H1 (cell line): ENCODE measurements at regions of chr2 and their contacts with region 1.

Region 1: DNA sequence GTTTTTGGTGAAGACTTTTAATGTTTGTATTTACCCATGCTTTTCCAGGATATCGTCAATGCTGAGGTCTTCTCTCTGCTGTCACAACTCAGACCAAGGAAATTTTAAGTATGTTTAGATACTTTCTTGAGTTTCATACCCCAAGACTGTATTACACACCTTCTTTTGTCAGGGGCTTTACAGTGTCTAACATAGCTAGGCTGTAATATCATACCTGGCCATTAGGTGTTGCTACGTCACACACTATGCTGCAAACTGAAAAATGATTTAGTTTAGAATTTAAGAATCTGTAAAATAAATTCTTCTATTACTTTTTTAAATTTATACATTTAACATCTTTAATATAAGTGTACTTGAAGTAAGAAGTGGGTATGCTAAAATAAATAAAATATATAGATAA is 358.4 kb upstream of the NRP2 start:
- DNase-seq: no peak
- H3K4me3 ChIP-seq: no peak overlapping the region
- H3K27ac ChIP-seq: no peak overlapping the region
- H3K4me1 ChIP-seq: no peaks in the 10 kb centered on the region
- H3K27me3 ChIP-seq: no peaks in the 10 kb centered on the region
- CTCF ChIP-seq: peak in 2 of 3 experiments; percentile 35 to 56; a peak in 2 of 4 replicates
- EP300 ChIP-seq: no peak
- POLR2A ChIP-seq: no peak
- RAD21 ChIP-seq: peak; percentile 73 to 76

Region 2: DNA sequence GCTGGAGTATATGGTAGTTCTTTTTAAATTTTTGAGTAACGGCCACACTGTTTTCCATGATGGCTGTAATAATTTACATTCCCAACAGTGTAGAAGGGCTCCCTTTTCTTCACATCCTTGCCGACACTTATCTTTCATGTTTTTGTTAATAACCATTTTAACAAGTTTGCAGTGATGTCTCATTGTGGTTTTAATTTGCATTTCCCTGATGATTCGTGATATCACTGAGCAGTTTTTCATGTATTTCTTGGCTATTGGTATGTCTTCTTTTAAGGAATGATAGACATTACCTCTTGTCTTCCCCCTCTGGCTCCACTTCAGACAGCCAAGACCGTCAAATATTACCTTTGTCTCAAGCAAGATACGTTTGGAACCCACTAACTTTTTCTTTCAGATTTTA is 12.7 kb before region 1 on chr2:
- CTCF ChIA-PET with region 1: interaction called, 12 read pairs
- POLR2A ChIA-PET with region 1: interaction called, 3 read pairs
- DNase-seq: no peak
- H3K4me3 ChIP-seq: no peak overlapping the region
- H3K27ac ChIP-seq: no peak overlapping the region
- H3K4me1 ChIP-seq: no peaks in the 10 kb centered on the region
- H3K27me3 ChIP-seq: peaks cover 0 to 2% (median 0%) of the 10 kb centered on the region in 4 experiments; a peak in 1 of 7 replicates
- CTCF ChIP-seq: no peak
- EP300 ChIP-seq: no peak
- POLR2A ChIP-seq: no peak
- RAD21 ChIP-seq: no peak

Region 3: GRCh38 chr2:205427112-205427511 is 103.2 kb after region 1 on chr2:
- CTCF ChIA-PET with region 1: no interaction called
- POLR2A ChIA-PET with region 1: no interaction called
- DNase-seq: no peak
- H3K4me3 ChIP-seq: no peak overlapping the region
- H3K27ac ChIP-seq: no peak overlapping the region
- H3K4me1 ChIP-seq: peaks cover 0 to 2% (median 0%) of the 10 kb centered on the region in 4 experiments; a peak in 1 of 7 replicates
- H3K27me3 ChIP-seq: no peaks in the 10 kb centered on the region; a peak in 1 of 7 replicates
- CTCF ChIP-seq: no peak
- EP300 ChIP-seq: no peak
- POLR2A ChIP-seq: no peak
- RAD21 ChIP-seq: no peak

Region 4: GRCh38 chr2:206031162-206031784 is 707.3 kb after region 1 on chr2:
- CTCF ChIA-PET with region 1: no interaction called
- POLR2A ChIA-PET with region 1: no interaction called
- DNase-seq: no peak
- H3K4me3 ChIP-seq: no peak overlapping the region
- H3K27ac ChIP-seq: no peak overlapping the region
- H3K4me1 ChIP-seq: peaks cover 0 to 3% (median 3%) of the 10 kb centered on the region in 4 experiments; a peak in 2 of 7 replicates
- H3K27me3 ChIP-seq: no peaks in the 10 kb centered on the region
- CTCF ChIP-seq: no peak
- EP300 ChIP-seq: no peak
- POLR2A ChIP-seq: no peak
- RAD21 ChIP-seq: no peak